ENCODE measurements at regions of chr6 and their contacts with region 1.

Region 1: DNA sequence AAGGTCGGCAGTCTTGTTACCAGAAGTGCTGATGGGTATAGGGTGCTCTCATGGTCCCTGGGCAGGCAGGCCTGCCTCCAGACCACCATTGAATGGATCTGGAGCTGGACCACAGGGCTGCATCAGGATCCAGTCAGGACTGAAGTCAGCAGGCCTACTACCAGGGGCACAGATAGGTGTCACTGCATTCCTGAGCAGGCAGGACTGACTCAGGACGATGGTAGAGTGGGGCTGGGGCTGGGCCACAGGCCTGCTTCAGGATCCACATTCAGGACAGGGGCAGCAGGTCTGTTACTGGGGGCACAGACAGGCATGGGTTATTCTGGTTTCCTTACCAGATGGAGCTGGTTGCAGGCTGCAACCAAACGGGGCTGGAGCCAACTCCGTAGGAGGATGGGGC is 51.4 kb upstream of the MAP3K4 start:
- DNase-seq: no peak
- ATAC-seq: no peak
- H3K4me3 ChIP-seq: no peak overlapping the region
- H3K27ac ChIP-seq: no peak overlapping the region
- H3K4me1 ChIP-seq: no peaks in the 10 kb centered on the region
- H3K27me3 ChIP-seq: no peaks in the 10 kb centered on the region
- CTCF ChIP-seq: no peak

Region 2: GRCh38 chr6:160315310-160315709 is 624.9 kb before region 1 on chr6:
- intact Hi-C with region 1: no loop called
- DNase-seq: no peak
- ATAC-seq: no peak
- H3K4me3 ChIP-seq: no peak overlapping the region
- H3K27ac ChIP-seq: no peak overlapping the region
- H3K4me1 ChIP-seq: no peaks in the 10 kb centered on the region
- H3K27me3 ChIP-seq: no peaks in the 10 kb centered on the region
- CTCF ChIP-seq: no peak

Region 3: GRCh38 chr6:160978141-160978901 is 38.1 kb after region 1 on chr6:
- intact Hi-C with region 1: loop called in 1 of 10 experiments (anchors 5 kb)
- DNase-seq: no peak
- ATAC-seq: no peak
- H3K4me3 ChIP-seq: no peak overlapping the region
- H3K27ac ChIP-seq: no peak overlapping the region
- H3K4me1 ChIP-seq: peaks cover 0 to 30% (median 21%) of the 10 kb centered on the region in 9 donors
- H3K27me3 ChIP-seq: no peaks in the 10 kb centered on the region
- CTCF ChIP-seq: no peak

Region 4: DNA sequence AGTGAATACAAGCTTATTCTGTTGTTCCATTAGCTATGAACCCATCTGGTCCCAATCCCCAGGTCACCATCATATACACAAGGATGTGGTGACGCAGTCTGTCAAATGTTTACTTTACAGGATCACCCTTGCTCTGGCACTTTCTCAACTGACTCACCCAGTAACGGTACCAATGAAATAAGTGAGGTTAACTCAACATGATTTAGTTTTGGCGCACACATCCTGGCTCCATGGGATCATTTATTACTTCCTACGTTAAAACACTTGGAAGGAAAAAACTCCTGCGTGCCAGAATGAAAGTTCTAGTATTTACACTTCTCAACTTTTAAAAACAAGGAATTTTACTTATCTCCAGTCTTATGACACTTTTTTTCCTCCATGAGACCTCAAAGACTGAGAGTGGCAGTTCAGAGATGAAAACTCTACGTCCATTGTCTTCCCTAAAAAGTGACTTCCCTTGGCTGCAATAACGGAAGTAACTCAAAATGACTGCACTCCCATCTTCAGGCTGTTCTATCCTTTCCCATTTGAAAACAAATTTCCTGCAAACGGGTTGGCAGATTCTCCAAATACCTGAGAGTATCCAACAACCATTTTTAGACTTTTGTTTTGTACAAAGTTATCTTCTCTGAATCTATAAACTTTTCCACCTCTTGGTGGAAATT is 317.7 kb after region 1 on chr6:
- intact Hi-C with region 1: no loop called
- DNase-seq: peak in 1 of 2 donors; percentile 45
- ATAC-seq: peak in 6 of 8 donors; percentile 33 to 65 (median 56)
- H3K4me3 ChIP-seq: no peak overlapping the region
- H3K27ac ChIP-seq: peak overlapping the region in 4 of 10 donors; percentile 10 to 53 (median 27)
- H3K4me1 ChIP-seq: peaks cover 0 to 23% (median 0%) of the 10 kb centered on the region in 9 donors
- H3K27me3 ChIP-seq: no peaks in the 10 kb centered on the region
- CTCF ChIP-seq: no peak

Measured in heart right ventricle (tissue), 16 donors.